ENCODE measurements at regions of chr2 and their contacts with region 1.

Region 1: DNA sequence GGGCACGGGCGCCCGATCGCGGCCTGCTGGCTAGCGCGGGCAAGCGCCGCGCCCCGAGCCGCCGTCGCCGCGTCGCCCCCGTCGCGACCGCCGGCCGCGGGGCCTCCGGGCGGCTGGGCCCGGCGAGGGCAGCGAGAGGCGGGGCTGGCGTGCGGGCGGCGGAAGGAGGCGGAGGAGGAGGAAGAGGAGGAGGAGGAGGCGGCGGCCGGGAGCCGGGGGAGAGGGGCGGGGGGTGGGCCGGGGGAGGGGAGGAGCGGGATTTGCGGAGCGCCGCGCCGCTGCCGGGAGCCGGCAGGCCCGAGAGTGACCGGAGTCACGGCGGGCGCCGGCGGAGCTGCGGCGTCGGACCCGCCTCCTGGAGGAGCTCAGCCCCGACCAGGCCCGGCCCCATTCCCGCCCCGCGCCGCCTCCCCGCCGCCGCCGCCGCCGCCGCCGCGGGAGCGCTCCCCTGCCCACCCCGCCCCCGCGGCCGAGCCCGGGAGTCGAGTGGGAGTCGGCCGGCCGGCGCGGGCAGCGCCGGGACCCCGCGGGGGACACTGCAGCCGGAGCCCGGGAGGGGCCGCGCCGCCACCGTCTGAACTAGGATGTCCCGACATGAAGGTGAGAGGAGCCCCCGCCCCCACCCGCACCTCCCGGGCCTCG is at the start of gene KCMF1:
- DNase-seq: peak; percentile 92
- H3K4me3 Mint-ChIP-seq: peak within 1 kb of the TSS; percentile 95
- H3K27ac Mint-ChIP-seq: peak within 1 kb of the TSS; percentile 100
- H3K4me1 Mint-ChIP-seq: peaks cover 35% of the 10 kb centered on the region
- H3K27me3 Mint-ChIP-seq: no peaks in the 10 kb centered on the region
- total RNA-seq, gene KCMF1: 98.1 and 101 TPM in 2 replicates

Region 2: GRCh38 chr2:83221258-83221657 is 1749.7 kb before region 1 on chr2:
- intact Hi-C with region 1: no loop called
- DNase-seq: no peak
- H3K4me3 Mint-ChIP-seq: no peak overlapping the region
- H3K27ac Mint-ChIP-seq: no peak overlapping the region
- H3K4me1 Mint-ChIP-seq: no peaks in the 10 kb centered on the region
- H3K27me3 Mint-ChIP-seq: no peaks in the 10 kb centered on the region

Region 3: DNA sequence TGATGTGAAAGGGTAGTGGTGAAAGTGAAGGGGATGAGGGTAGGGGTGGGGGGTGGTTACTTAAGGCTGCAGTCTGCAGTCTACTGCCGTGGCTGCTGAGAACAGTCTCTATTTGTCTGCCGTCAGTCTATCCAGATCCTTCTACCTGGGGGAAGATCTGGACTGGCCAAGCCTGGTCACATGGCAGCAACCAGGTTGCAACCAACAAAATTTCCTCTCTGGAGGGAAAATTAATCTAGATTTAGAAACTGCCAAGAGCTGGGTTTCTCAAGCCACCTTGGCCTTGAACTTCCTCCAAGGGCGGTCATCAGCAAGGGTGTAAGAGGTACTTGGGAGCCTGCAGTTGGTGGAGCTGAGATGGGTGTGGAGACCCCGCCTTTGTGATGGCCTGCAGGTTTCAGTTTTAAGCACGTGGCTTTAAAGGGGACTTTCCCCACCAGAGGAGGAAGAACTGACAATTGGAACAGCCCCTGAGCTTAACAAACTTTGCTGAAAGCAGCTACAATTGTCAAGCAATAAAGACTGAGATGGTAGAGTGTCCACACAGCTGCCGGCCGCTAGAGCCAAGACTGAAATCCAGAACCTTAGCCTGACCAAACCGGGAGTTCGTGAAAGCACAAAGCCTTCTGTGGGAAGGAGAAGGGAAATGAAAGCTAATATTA is 31.4 kb before region 1 on chr2:
- intact Hi-C with region 1: loop called (anchors 1 kb)
- DNase-seq: peak; percentile 95
- H3K4me3 Mint-ChIP-seq: peak overlapping the region; percentile 84
- H3K27ac Mint-ChIP-seq: peak overlapping the region; percentile 98
- H3K4me1 Mint-ChIP-seq: peaks cover 45% of the 10 kb centered on the region
- H3K27me3 Mint-ChIP-seq: no peaks in the 10 kb centered on the region

Region 4: DNA sequence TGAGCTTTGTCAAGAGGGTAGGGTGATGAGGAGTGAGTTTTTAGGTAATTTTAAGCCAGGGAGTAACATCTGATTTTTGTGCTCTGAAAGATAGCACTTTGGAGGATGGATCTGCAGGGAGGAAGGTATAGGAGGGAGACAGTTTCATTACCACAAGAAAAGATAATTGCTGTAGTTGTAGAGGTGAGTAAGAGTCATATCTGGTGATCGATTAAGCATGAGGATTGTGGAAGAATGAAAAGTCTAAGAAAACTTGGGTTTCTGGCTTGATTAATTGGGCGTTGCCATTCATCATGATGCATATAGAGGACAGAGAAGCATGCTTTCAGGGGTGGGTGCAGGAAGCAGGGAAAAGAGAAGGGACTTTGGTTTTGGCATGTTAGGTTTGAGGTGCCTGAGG is 18.4 kb after region 1 on chr2:
- intact Hi-C with region 1: loop called (anchors 2 kb)
- DNase-seq: no peak
- H3K4me3 Mint-ChIP-seq: no peak overlapping the region
- H3K27ac Mint-ChIP-seq: no peak overlapping the region
- H3K4me1 Mint-ChIP-seq: peaks cover 33% of the 10 kb centered on the region
- H3K27me3 Mint-ChIP-seq: no peaks in the 10 kb centered on the region

Region 5: DNA sequence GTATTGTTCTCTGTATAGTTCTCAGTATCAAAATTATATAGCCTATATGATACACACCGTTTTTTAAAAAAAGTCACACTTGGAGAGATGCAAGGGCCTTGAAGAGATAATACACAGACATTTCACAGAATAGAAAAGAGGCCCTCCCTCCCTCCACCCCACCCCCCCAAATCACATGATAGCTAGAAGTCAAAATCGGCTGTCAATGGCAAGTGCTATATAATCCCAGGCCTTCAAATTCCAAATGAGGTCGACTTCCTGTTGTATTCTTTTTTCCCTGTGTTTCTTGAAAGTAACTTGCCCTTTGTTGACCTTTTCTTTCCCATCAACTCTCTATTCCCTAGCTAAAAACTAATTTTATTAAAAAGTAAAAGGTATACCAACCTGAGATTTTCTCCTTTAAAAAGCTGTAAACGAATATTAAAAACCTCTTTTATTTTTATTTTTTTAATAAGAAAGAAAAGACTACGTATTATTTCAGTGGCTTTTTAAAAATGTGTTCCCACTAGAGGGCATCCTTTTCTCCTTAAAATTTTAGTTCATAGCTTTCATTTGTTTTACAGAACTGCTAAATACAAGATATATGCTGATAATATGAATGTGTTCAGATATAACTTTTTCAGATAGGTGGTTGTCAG is 46.5 kb after region 1 on chr2:
- intact Hi-C with region 1: loop called (anchors 2 kb)
- DNase-seq: no peak
- H3K4me3 Mint-ChIP-seq: no peak overlapping the region
- H3K27ac Mint-ChIP-seq: peak overlapping the region; percentile 83
- H3K4me1 Mint-ChIP-seq: peaks cover 48% of the 10 kb centered on the region
- H3K27me3 Mint-ChIP-seq: no peaks in the 10 kb centered on the region

Measured in activated CD4-positive, alpha-beta T cell treated with anti-CD3 and anti-CD28 coated beads, Interleukin-2, amount 10 ng/mL, durations not matched to agents 24 days and 14 days (primary cell).